ENCODE measurements at regions of chr6 and their contacts with region 1.

Region 1: DNA sequence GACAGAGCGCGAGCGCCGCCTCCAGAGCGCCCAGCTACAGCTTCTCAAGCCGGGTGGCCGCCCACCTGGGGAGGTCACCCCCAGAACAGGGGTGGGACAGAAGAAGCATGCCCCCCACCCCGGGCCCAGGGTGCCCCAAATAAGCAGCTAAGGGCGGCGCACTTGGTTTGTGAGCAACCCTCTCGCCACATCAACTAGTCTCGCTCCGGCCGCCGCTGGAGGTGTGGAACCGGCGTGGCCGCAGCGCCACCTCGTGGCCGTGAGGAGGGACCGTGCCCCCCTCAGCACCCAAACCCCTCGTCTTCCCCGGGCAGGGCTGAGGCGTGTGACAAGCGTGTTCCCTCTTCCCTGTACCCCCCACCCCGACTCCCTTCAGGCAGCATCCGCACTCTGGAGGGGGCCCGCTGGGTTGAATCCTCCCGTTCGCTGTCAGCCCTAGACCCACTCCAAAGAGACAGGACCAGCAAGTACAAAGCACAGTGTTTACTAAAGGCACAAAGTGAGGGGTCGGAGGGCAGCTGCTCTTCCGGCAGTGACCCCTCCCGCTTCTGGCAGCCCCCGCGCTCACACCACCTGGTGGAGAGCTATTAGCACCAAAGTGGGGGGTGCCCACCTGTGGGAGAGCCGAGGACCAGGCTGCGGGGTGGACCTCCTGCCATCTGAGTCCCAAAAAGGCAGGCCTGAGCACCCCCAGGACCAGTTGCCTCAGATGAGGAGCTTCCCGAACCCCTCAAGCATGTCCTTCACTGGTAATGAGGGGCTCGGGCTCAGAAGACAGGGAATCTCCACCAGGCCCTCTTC is 45.4 kb downstream of the MDFI start:
- DNase-seq: peak in 1 of 2 experiments; percentile 91
- H3K4me3 ChIP-seq: peak overlapping the region in 3 of 4 experiments; percentile 11 to 57 (median 29); a peak in 5 of 8 replicates
- H3K27ac ChIP-seq: no peak overlapping the region
- H3K4me1 ChIP-seq: peaks cover 5 to 41% (median 18%) of the 10 kb centered on the region in 4 experiments
- H3K27me3 ChIP-seq: peaks cover 0 to 12% (median 5%) of the 10 kb centered on the region in 4 experiments; a peak in 4 of 7 replicates
- CTCF ChIP-seq: peak in 2 of 3 experiments; percentile 95; a peak in 3 of 4 replicates
- EP300 ChIP-seq: no peak
- POLR2A ChIP-seq: no peak
- RAD21 ChIP-seq: peak; percentile 92

Region 2: GRCh38 chr6:40011844-40012243 is 1671.9 kb before region 1 on chr6:
- CTCF ChIA-PET with region 1: no interaction called
- POLR2A ChIA-PET with region 1: no interaction called
- DNase-seq: peak in 1 of 2 experiments; percentile 25
- H3K4me3 ChIP-seq: no peak overlapping the region
- H3K27ac ChIP-seq: no peak overlapping the region
- H3K4me1 ChIP-seq: peaks cover 0 to 4% (median 0%) of the 10 kb centered on the region in 4 experiments; a peak in 1 of 7 replicates
- H3K27me3 ChIP-seq: no peaks in the 10 kb centered on the region
- CTCF ChIP-seq: peak in 1 of 3 experiments; percentile 4; a peak in 1 of 4 replicates
- EP300 ChIP-seq: no peak
- POLR2A ChIP-seq: no peak
- RAD21 ChIP-seq: peak; percentile 11 to 21; a peak in 2 of 4 replicates

Region 3: DNA sequence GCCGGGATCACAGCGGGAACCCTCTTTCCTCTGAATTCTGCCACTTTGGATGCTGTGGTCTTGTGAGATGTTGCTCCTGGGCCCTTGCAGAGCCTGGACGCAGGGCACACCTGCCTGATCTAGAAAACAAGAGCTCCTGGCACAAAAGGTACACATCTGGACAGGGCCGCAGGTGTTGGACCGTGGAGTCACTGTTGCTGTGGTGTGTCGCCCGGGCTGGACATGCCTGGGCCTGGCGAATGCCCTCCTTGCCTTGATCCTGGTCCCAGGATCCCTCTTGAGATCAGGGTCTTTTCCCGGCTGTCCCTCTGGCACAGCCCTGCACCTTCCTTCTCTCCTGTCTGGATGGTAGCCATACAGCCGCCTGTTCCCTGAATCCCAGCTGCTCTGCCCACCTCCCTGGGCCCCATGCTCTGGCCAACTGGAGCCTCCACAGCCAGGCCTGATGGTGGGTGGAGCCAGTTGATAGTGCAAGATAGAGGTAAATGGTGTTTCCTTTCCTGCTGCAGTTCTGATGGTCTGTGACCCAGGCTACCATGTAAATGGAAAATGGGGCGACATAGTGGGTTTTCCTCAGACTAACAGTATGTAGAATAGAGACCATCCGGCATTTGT is 132.5 kb before region 1 on chr6:
- CTCF ChIA-PET with region 1: interaction called, 12 read pairs
- POLR2A ChIA-PET with region 1: no interaction called
- DNase-seq: no peak
- H3K4me3 ChIP-seq: no peak overlapping the region
- H3K27ac ChIP-seq: no peak overlapping the region
- H3K4me1 ChIP-seq: peaks cover 41 to 70% (median 50%) of the 10 kb centered on the region in 4 experiments
- H3K27me3 ChIP-seq: peaks cover 20 to 78% (median 73%) of the 10 kb centered on the region in 4 experiments
- CTCF ChIP-seq: no peak
- EP300 ChIP-seq: no peak
- POLR2A ChIP-seq: no peak
- RAD21 ChIP-seq: no peak

Region 4: GRCh38 chr6:41615254-41615653 is 68.5 kb before region 1 on chr6:
- CTCF ChIA-PET with region 1: interaction called, 299 read pairs
- POLR2A ChIA-PET with region 1: no interaction called
- DNase-seq: no peak
- H3K4me3 ChIP-seq: no peak overlapping the region
- H3K27ac ChIP-seq: no peak overlapping the region
- H3K4me1 ChIP-seq: no peaks in the 10 kb centered on the region
- H3K27me3 ChIP-seq: no peaks in the 10 kb centered on the region
- CTCF ChIP-seq: no peak
- EP300 ChIP-seq: no peak
- POLR2A ChIP-seq: no peak
- RAD21 ChIP-seq: no peak

Region 5: GRCh38 chr6:41638002-41638934 is 45.4 kb before region 1 on chr6 and contains the start of gene MDFI:
- CTCF ChIA-PET with region 1: interaction called, 32 read pairs
- POLR2A ChIA-PET with region 1: interaction called, 3 read pairs
- DNase-seq: peak; percentile 46 to 81
- H3K4me3 ChIP-seq: peak within 1 kb of the TSS; percentile 67 to 89 (median 78)
- H3K27ac ChIP-seq: no peak within 1 kb of the TSS
- H3K4me1 ChIP-seq: peaks cover 8 to 28% (median 17%) of the 10 kb centered on the region in 4 experiments
- H3K27me3 ChIP-seq: peaks cover 8 to 69% (median 37%) of the 10 kb centered on the region in 4 experiments; a peak in 6 of 7 replicates
- CTCF ChIP-seq: no peak
- EP300 ChIP-seq: no peak
- POLR2A ChIP-seq: no peak
- RAD21 ChIP-seq: no peak; a peak in 1 of 4 replicates
- total RNA-seq, gene MDFI: 38.5 and 41.0 TPM in 2 replicates

Region 6: DNA sequence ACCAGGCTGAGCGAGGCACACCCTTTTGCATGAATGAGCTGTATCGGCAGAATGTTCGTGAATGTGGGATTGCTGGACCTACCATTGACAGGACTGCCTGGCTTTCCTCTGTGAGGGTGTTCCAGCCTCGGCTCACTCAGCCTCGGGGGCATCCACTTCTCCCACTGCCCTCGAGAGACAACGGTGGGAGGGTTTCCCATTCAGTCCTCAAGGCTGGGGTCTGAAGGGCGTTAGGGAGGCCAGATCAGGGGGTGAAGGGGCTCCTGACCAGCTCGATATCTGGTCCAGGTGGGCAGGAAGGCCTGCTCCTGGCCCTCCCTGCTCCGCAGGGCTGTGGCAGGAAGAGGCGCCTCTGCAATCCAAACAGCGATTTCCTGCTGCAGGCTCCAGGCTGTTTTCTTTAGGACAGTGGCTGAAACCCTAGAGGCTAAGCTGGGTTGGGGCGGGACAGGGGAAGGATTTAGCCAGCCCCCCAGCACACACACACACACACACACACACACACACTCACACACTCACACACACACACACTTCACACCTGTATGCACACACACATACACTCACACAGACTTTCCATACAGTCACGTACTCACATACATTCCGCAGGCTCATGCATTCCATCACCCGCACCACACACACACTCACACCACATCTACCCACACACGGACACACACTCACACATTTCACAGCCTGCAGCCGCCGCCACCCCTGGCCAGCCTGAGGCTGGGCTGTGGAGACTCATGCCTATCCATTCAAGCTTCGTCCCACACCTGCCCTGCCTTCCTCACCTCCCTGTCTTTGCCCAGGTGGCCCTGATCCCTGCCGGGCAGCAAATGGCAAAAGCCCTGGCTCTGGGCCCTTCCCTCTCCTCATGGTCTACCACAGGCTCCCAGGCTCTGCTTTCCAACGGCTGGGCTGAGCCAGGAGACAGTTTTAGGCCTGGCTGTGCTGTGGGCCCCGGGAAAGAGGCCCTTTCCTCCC is 27.7 kb before region 1 on chr6:
- CTCF ChIA-PET with region 1: interaction called, 16 read pairs
- POLR2A ChIA-PET with region 1: interaction called, 3 read pairs
- DNase-seq: peak in 1 of 2 experiments; percentile 49
- H3K4me3 ChIP-seq: no peak overlapping the region
- H3K27ac ChIP-seq: no peak overlapping the region
- H3K4me1 ChIP-seq: peaks cover 0 to 11% (median 4%) of the 10 kb centered on the region in 4 experiments; a peak in 4 of 7 replicates
- H3K27me3 ChIP-seq: no peaks in the 10 kb centered on the region; a peak in 1 of 7 replicates
- CTCF ChIP-seq: no peak
- EP300 ChIP-seq: no peak
- POLR2A ChIP-seq: no peak
- RAD21 ChIP-seq: no peak

Region 7: DNA sequence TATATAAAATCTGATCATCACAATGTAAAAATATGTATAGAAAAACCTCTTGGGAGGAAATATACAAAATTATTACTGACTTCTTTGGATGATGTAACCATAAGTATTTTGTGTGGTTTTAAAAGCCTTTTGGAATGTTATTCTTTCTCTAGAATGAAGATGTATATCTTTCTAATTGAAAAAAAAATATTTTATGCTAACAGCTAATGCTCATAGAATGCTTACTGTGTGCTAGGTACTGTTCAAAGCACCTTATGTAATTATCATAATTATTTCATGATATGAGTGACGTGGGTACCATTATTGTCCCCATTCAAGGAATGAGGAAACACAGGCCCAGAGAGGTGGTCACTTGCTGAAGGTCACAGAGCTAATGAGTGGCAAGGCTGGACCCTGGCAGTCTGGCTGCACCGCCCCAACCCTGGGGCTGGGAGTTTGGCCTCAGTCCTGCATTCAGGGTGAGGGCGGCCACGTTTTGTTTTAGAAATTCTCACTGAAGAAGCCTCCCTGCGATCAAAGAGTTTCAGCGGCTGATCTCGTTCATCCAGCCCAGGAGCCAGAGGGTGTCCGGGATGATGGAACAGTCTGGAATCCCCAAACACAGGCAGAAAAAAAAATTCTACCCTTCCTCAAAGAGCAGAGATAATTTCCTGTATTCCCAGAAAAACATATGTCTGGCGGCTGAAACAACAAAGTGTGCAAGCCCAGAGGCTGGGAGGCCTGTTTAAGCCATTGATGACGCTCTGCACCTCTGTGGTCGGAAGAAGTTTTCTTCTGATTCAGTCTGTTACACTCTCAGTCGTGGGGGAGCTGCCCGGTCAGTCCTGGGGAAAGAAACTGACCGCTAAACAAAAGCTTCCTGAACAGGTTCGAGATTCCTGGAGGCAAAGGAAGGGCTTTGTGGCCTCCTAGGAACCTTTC is 14.4 kb after region 1 on chr6:
- CTCF ChIA-PET with region 1: interaction called, 181 read pairs
- POLR2A ChIA-PET with region 1: interaction called, 4 read pairs
- DNase-seq: no peak
- H3K4me3 ChIP-seq: no peak overlapping the region
- H3K27ac ChIP-seq: no peak overlapping the region
- H3K4me1 ChIP-seq: peaks cover 0 to 8% (median 2%) of the 10 kb centered on the region in 4 experiments; a peak in 5 of 7 replicates
- H3K27me3 ChIP-seq: no peaks in the 10 kb centered on the region; a peak in 1 of 7 replicates
- CTCF ChIP-seq: no peak
- EP300 ChIP-seq: no peak
- POLR2A ChIP-seq: no peak
- RAD21 ChIP-seq: no peak